Gastrocnemius medialis (tissue), 4 donors: ENCODE measurements at regions of chr5 and their contacts with region 1.

Region 1: DNA sequence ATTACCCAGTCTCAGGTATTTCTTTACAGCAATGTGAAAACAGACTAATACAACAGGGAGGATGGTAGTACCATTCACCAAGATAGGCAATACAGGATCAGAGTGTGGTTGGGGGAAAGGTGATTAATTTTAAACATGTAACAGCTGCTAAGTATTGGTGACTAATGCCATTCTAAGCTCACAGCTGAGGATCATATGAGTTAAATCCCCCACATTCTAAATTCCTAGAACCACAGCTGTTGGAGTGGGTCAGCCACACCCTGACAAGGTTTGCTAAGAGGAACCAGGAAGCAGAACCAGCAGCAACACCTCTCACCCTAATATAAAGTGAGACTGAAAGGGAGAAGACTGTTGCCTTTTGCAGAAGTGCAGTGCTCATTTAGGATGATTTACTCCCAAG is 24.8 kb downstream of the HSPB3 start:
- DNase-seq: no peak
- ATAC-seq: no peak
- H3K4me3 ChIP-seq: no peak overlapping the region
- H3K27ac ChIP-seq: no peak overlapping the region
- H3K4me1 ChIP-seq: peaks cover 11 to 14% of the 10 kb centered on the region in 2 donors
- H3K27me3 ChIP-seq: no peaks in the 10 kb centered on the region
- CTCF ChIP-seq: no peak
- POLR2A ChIP-seq: no peak

Region 2: GRCh38 chr5:54243473-54244080 is 236.7 kb before region 1 on chr5:
- in situ Hi-C with region 1: no loop called
- intact Hi-C with region 1: loop called (anchors 5 kb)
- DNase-seq: no peak
- ATAC-seq: no peak
- H3K4me3 ChIP-seq: no peak overlapping the region
- H3K27ac ChIP-seq: no peak overlapping the region
- H3K4me1 ChIP-seq: peaks cover 0 to 3% of the 10 kb centered on the region in 2 donors
- H3K27me3 ChIP-seq: no peaks in the 10 kb centered on the region
- CTCF ChIP-seq: peak; percentile 4 to 51 (median 41)
- POLR2A ChIP-seq: no peak

Region 3: GRCh38 chr5:54443270-54443669 is 37.0 kb before region 1 on chr5:
- in situ Hi-C with region 1: loop called in 1 of 4 experiments (anchors 5 kb)
- intact Hi-C with region 1: no loop called
- DNase-seq: no peak
- ATAC-seq: no peak
- H3K4me3 ChIP-seq: no peak overlapping the region
- H3K27ac ChIP-seq: no peak overlapping the region
- H3K4me1 ChIP-seq: peaks cover 9 to 12% of the 10 kb centered on the region in 2 donors
- H3K27me3 ChIP-seq: no peaks in the 10 kb centered on the region
- CTCF ChIP-seq: peak; percentile 12 to 48 (median 33)
- POLR2A ChIP-seq: no peak

Region 4: GRCh38 chr5:54455413-54456157 is 24.7 kb before region 1 on chr5 and contains the start of gene HSPB3:
- in situ Hi-C with region 1: no loop called
- intact Hi-C with region 1: loop called (anchors 2 kb)
- DNase-seq: peak; percentile 78 to 81
- ATAC-seq: peak; percentile 79 to 90
- H3K4me3 ChIP-seq: peak within 1 kb of the TSS; percentile 56 to 61 (median 58)
- H3K27ac ChIP-seq: peak within 1 kb of the TSS; percentile 86 to 89 (median 86)
- H3K4me1 ChIP-seq: peaks cover 25 to 26% of the 10 kb centered on the region in 2 donors
- H3K27me3 ChIP-seq: no peaks in the 10 kb centered on the region
- CTCF ChIP-seq: peak in 1 of 5 experiments; percentile 9
- POLR2A ChIP-seq: peak; percentile 93 to 97
- total RNA-seq, gene HSPB3: 68.1 to 510 (median 204) TPM

Region 5: GRCh38 chr5:54570916-54571315 is 90.6 kb after region 1 on chr5:
- in situ Hi-C with region 1: no loop called
- intact Hi-C with region 1: no loop called
- DNase-seq: no peak
- ATAC-seq: no peak
- H3K4me3 ChIP-seq: no peak overlapping the region
- H3K27ac ChIP-seq: no peak overlapping the region
- H3K4me1 ChIP-seq: peaks cover 5 to 6% of the 10 kb centered on the region in 2 donors
- H3K27me3 ChIP-seq: no peaks in the 10 kb centered on the region
- CTCF ChIP-seq: no peak
- POLR2A ChIP-seq: no peak